ENCODE measurements at regions of chr20 and their contacts with region 1.

Region 1: GRCh38 chr20:20327746-20328145 is 40.2 kb upstream of the INSM1 start:
- DNase-seq: no peak
- ATAC-seq: no peak
- H3K4me3 ChIP-seq: no peak overlapping the region
- H3K4me3 Mint-ChIP-seq: no peak overlapping the region
- H3K27ac ChIP-seq: no peak overlapping the region
- H3K27ac Mint-ChIP-seq: no peak overlapping the region
- H3K4me1 ChIP-seq: no peaks in the 10 kb centered on the region
- H3K4me1 Mint-ChIP-seq: no peaks in the 10 kb centered on the region
- H3K27me3 ChIP-seq: peaks cover 0 to 11% of the 10 kb centered on the region in 2 experiments
- H3K27me3 Mint-ChIP-seq: peaks cover 15 to 22% of the 10 kb centered on the region in 2 donors

Region 2: GRCh38 chr20:21465799-21466198 is 1138.1 kb after region 1 on chr20:
- CTCF ChIA-PET with region 1: no interaction called
- POLR2A ChIA-PET with region 1: interaction called in 1 of 2 experiments, 11 read pairs
- DNase-seq: no peak
- ATAC-seq: no peak
- H3K4me3 ChIP-seq: no peak overlapping the region
- H3K4me3 Mint-ChIP-seq: no peak overlapping the region
- H3K27ac ChIP-seq: no peak overlapping the region
- H3K27ac Mint-ChIP-seq: no peak overlapping the region
- H3K4me1 ChIP-seq: no peaks in the 10 kb centered on the region
- H3K4me1 Mint-ChIP-seq: no peaks in the 10 kb centered on the region
- H3K27me3 ChIP-seq: peaks cover 0 to 7% of the 10 kb centered on the region in 2 experiments
- H3K27me3 Mint-ChIP-seq: peaks cover 14 to 19% of the 10 kb centered on the region in 2 donors

Measured in T-cell (primary cell).